ENCODE measurements at regions of chr19 and their contacts with region 1.

Region 1: GRCh38 chr19:35545001-35545911 is at the start of gene TMEM147:
- DNase-seq: peak; percentile 85
- H3K4me3 Mint-ChIP-seq: peak within 1 kb of the TSS; percentile 87
- H3K27ac Mint-ChIP-seq: peak within 1 kb of the TSS; percentile 90
- H3K4me1 Mint-ChIP-seq: peaks cover 38% of the 10 kb centered on the region
- H3K27me3 Mint-ChIP-seq: no peaks in the 10 kb centered on the region
- total RNA-seq, gene TMEM147: 63.1 to 63.4 TPM

Region 2: DNA sequence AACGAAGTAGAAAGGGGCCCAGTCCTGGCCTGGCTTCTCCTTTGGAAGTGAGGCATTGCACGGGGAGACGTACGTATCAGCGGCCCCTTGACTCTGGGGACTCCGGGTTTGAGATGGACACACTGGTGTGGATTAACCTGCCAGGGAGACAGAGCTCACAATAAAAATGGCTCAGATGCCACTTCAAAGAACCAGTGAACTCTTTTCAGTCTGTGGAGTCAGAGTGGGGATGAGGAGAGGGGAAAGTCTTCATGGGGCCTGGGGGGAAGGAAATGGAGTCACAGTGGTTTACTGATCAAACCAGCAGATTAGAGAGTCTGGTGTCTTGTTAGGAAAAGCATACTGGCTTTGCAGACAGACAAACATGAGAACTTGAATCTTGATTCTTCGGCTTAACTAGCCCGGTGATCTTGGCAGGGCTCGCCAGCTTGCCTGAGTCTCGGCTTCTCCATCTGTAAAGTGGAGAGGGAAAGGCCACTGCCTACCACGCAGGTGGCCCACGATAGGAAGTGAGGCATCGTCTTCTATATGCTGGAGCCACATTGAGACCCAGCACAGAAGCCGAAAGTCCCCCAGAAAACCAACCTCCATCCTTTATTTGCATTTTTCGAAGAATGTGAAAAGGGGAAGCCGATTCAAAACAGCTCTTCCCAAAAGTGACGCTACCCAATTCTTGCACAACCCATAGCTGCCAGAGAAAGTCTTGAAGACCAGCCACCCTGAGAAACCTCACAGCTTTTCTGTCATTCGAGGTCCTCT is 197.9 kb before region 1 on chr19 and contains the start of gene FFAR1:
- CTCF ChIA-PET with region 1: interaction called, 3 read pairs
- intact Hi-C with region 1: loop called (anchors 1 kb)
- DNase-seq: peak; percentile 91
- H3K4me3 Mint-ChIP-seq: peak within 1 kb of the TSS; percentile 46
- H3K27ac Mint-ChIP-seq: peak within 1 kb of the TSS; percentile 98
- H3K4me1 Mint-ChIP-seq: peaks cover 32% of the 10 kb centered on the region
- H3K27me3 Mint-ChIP-seq: peaks cover 2% of the 10 kb centered on the region
- total RNA-seq, gene FFAR1: 0.10 TPM in 1 of 2 experiments, not detected in the other

Region 3: DNA sequence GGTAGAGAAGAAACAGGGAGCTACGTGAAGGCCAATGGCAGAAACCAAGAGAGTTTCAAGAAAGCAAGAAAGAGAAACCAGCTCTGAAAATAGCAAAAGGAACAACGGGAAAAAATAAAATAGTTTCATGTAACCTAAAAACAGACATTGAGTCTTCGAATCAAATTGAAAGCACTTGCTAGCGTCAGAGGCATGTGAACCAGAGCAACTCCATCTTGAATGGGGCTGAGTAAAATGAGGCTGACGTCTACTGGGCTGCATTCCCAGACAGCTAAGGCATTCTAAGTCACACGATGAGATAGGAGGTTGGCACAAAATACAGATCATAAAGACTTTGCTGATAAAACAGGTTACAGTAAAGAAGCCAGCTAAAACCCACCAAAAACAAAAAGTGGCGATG is 33.5 kb after region 1 on chr19:
- CTCF ChIA-PET with region 1: interaction called, 12 read pairs
- intact Hi-C with region 1: no loop called
- DNase-seq: no peak
- H3K4me3 Mint-ChIP-seq: no peak overlapping the region
- H3K27ac Mint-ChIP-seq: no peak overlapping the region
- H3K4me1 Mint-ChIP-seq: no peaks in the 10 kb centered on the region
- H3K27me3 Mint-ChIP-seq: peaks cover 5% of the 10 kb centered on the region

Region 4: GRCh38 chr19:35612559-35613321 is 67.5 kb after region 1 on chr19 and contains the start of gene HAUS5:
- CTCF ChIA-PET with region 1: interaction called, 6 read pairs
- intact Hi-C with region 1: loop called (anchors 1 kb)
- DNase-seq: peak; percentile 96
- H3K4me3 Mint-ChIP-seq: peak within 1 kb of the TSS; percentile 86
- H3K27ac Mint-ChIP-seq: peak within 1 kb of the TSS; percentile 87
- H3K4me1 Mint-ChIP-seq: peaks cover 26% of the 10 kb centered on the region
- H3K27me3 Mint-ChIP-seq: no peaks in the 10 kb centered on the region
- total RNA-seq, gene HAUS5: 40.4 to 42.5 TPM

Region 5: DNA sequence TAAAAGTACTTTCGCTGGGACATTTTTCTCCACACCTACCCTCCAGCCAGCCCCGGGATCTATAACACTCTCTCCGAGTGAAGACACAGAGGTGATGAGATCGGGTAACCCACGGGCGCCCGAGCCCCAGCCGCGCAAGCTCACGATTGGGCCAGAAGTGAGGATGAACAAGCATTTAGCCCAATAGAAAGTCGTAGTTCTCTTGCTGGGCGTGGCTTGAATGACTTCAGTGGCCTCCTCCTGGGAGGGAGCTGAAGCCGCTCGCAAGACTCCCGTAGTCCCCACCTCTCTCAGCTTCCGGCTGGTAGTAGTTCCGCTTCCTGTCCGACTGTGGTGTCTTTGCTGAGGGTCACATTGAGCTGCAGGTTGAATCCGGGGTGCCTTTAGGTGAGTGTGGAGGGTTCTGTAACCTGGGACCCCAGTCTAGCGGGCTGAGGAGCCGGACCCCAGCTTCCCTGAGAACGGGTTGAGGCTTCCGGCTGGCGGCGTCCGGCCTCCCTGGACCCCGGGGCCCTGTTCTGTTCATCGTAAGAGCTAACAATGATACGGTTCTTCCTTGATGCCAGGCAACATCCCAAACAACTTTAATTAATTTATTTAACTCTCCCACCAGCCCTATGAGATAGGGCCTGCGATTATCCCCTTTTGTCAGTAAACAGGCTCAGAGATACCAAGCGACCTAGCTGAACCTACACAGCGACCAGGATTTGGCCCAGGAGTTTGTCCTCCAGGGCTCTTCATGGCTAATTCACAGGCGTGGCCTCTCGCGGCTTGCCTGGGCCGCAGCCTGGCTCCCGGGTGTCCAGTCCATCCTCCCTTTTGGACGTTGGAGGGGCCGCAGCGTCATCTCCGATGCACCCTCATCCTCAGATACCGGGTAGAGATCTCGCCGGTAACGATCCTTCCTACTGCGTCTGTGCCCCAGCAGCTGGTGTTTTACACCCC is 103.0 kb after region 1 on chr19 and contains the start of gene COX6B1:
- CTCF ChIA-PET with region 1: interaction called, 12 read pairs
- intact Hi-C with region 1: loop called (anchors 5 kb)
- DNase-seq: peak; percentile 97
- H3K4me3 Mint-ChIP-seq: peak within 1 kb of the TSS; percentile 87
- H3K27ac Mint-ChIP-seq: peak within 1 kb of the TSS; percentile 91
- H3K4me1 Mint-ChIP-seq: peaks cover 40% of the 10 kb centered on the region
- H3K27me3 Mint-ChIP-seq: no peaks in the 10 kb centered on the region
- total RNA-seq, gene COX6B1: 499 to 512 TPM

Region 6: GRCh38 chr19:35693830-35694599 is 148.8 kb after region 1 on chr19:
- CTCF ChIA-PET with region 1: interaction called, 3 read pairs
- intact Hi-C with region 1: loop called (anchors 5 kb)
- DNase-seq: peak; percentile 97
- H3K4me3 Mint-ChIP-seq: no peak overlapping the region
- H3K27ac Mint-ChIP-seq: peak overlapping the region; percentile 77
- H3K4me1 Mint-ChIP-seq: peaks cover 24% of the 10 kb centered on the region
- H3K27me3 Mint-ChIP-seq: no peaks in the 10 kb centered on the region

Measured in activated naive CD4-positive, alpha-beta T cell treated with anti-CD3 and anti-CD28 coated beads for 36 hours (primary cell).